ENCODE measurements at regions of chr18 and their contacts with region 1.

Region 1: DNA sequence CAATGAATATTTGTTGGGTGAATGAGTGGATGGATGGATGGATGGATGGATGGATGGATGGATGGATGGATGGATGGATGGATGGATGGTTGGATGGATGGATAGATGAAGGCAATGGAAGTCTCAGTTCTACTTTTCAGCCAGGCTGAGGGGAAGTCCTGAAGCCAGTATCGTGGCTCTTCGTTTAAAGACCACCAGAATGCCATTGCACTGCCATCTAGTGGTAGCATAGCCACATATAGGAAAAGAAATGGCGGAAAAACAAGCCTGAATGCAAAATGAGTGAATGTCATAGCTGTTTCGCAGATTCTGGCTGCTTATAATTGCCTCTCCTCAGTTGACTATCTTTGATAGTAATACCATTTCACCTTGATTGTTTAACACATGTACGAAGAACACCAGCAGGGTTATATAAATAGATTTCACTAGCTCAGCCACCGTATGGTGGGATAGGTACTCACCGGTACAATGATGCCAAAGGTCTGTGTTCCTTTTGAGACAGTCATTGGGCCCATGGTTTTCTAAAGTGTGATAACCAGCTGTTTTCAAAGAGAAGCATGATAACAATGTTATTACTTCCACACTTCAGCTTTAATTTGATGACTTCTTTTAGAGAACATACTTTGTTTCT is 62.3 kb upstream of the GREB1L start:
- DNase-seq: no peak

Region 2: DNA sequence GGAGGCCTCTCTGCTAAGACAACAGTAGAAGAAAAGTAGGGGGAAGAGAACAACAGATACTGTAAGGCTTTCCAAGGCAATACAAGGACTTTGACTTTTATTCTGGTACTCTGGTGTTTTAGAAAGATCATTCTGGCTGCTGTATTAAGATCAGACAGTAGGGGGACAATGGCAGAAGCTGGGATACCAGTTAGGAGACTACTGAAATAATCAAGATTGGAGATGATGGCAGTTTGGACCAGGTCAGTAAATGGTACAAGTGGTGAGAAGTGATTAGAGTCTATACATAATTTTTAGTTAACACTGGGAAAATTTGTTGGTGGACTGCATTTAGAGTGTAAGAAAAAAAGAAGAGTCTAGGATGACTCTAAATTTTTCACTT is 207.8 kb before region 1 on chr18:
- intact Hi-C with region 1: loop called (anchors 10 kb)
- DNase-seq: no peak

Region 3: DNA sequence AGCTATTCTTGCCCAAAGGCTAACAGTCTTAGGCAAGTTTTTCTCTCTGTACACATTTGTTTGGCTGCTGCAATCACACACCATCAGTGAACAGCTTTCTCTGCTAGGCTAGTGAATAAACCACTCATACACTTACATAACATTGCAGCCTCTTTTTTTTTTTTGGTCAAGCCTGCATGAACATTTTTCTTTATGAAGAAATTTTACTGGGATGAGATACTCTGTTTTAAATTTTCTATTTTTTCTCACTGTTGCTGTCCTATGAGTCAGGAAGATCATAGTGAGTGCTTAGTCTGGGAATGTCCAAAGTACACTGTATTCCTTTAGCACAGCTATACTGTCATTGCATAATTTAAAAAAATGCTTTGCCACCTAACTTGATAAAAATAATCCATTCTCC is 126.6 kb before region 1 on chr18:
- intact Hi-C with region 1: loop called (anchors 10 kb)
- DNase-seq: no peak

Region 4: DNA sequence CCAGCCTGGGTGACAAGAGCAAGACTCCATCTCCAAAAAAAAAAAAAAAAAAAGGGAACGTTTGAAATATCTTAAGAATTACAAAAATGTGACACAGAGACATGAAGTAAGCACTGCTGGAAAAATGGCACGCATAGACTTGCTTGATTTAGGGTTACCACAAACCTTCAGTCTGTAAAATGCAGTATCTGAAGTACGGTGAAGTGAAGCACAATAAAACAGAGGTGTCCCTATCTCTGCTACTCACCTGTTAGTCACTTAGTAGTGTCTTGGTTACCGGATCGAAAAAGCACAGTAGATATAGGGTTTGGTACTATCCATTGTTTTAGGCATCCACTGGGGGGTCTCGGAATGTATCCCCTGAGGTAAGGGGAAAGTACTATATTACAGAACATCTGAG is 50.7 kb after region 1 on chr18:
- intact Hi-C with region 1: loop called (anchors 10 kb)
- DNase-seq: no peak